T-cell (primary cell): ENCODE measurements at regions of chr3 and their contacts with region 1.

Region 1: DNA sequence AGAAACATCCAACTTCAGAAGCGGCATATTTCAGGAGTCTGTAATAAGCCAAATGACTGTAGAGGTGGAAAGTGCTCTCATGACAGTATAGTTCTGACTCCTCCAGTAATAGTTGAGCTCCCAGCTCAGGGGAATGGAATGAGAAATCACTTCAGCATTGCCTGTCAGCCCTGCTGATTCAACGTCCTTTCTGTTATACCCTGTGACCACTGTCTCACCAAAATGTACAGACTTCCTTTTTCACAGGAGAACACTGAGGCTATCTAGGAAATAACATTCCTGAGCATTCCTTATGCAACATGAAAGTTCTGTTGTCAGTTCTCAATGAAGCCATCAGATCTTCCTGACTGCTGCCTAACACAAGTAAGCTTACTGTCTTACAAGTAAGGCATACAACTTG is 284.5 kb upstream of the MME start:
- DNase-seq: no peak
- ATAC-seq: no peak
- H3K4me3 ChIP-seq: no peak overlapping the region
- H3K4me3 Mint-ChIP-seq: no peak overlapping the region
- H3K27ac ChIP-seq: no peak overlapping the region
- H3K27ac Mint-ChIP-seq: no peak overlapping the region
- H3K4me1 ChIP-seq: no peaks in the 10 kb centered on the region
- H3K4me1 Mint-ChIP-seq: no peaks in the 10 kb centered on the region
- H3K27me3 ChIP-seq: no peaks in the 10 kb centered on the region
- H3K27me3 Mint-ChIP-seq: no peaks in the 10 kb centered on the region

Region 2: GRCh38 chr3:152843955-152844354 is 1951.6 kb before region 1 on chr3:
- CTCF ChIA-PET with region 1: interaction called in 1 of 2 experiments, 10 read pairs
- POLR2A ChIA-PET with region 1: no interaction called
- DNase-seq: no peak
- ATAC-seq: no peak
- H3K4me3 ChIP-seq: no peak overlapping the region
- H3K4me3 Mint-ChIP-seq: no peak overlapping the region
- H3K27ac ChIP-seq: no peak overlapping the region
- H3K27ac Mint-ChIP-seq: no peak overlapping the region
- H3K4me1 ChIP-seq: peaks cover 0 to 2% of the 10 kb centered on the region in 2 experiments
- H3K4me1 Mint-ChIP-seq: no peaks in the 10 kb centered on the region
- H3K27me3 ChIP-seq: no peaks in the 10 kb centered on the region
- H3K27me3 Mint-ChIP-seq: peaks cover 8 to 15% of the 10 kb centered on the region in 2 donors

Region 3: GRCh38 chr3:154734468-154734867 is 61.1 kb before region 1 on chr3:
- CTCF ChIA-PET with region 1: no interaction called
- POLR2A ChIA-PET with region 1: no interaction called
- DNase-seq: no peak
- ATAC-seq: no peak
- H3K4me3 ChIP-seq: no peak overlapping the region
- H3K4me3 Mint-ChIP-seq: no peak overlapping the region
- H3K27ac ChIP-seq: no peak overlapping the region
- H3K27ac Mint-ChIP-seq: no peak overlapping the region
- H3K4me1 ChIP-seq: no peaks in the 10 kb centered on the region
- H3K4me1 Mint-ChIP-seq: no peaks in the 10 kb centered on the region
- H3K27me3 ChIP-seq: no peaks in the 10 kb centered on the region
- H3K27me3 Mint-ChIP-seq: no peaks in the 10 kb centered on the region

Region 4: DNA sequence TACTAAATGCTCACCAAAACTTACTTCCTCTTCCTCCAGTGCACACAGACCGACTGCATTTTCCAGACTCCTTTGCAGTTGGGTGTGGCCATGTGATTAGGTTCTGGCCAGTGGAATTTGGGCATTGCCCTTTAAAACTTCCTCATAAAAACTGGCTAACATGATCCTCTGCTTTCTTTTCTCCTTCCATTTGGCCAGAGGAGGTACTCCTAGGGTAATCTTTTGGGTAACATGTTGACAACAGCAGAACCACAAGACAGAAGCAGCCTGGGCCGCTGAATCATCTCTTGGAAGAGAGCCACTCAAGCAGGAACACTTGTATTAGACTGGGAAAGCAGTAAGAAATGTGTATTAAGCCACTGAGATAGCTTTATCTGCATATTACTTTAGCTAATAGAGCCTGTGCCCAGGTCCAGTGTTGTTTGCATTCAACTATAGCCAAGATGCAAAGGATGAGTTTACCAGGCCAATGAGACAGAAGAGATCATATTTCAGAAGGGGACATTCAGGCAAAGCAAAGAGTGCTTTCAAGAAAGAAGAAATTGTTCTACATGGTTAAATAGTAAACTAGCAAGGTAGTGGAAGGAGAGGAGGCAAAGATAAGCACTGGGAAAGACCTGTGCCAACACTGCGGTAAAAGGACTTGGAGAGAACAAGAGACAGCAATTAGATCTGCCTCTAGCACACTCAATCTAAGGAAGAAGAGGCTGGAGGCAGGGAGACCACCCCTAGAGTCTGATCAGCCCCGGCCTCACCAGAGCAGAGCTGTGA is 869.5 kb after region 1 on chr3:
- CTCF ChIA-PET with region 1: interaction called in 1 of 2 experiments, 10 read pairs
- POLR2A ChIA-PET with region 1: no interaction called
- DNase-seq: no peak
- ATAC-seq: no peak
- H3K4me3 ChIP-seq: no peak overlapping the region
- H3K4me3 Mint-ChIP-seq: no peak overlapping the region
- H3K27ac ChIP-seq: no peak overlapping the region
- H3K27ac Mint-ChIP-seq: no peak overlapping the region
- H3K4me1 ChIP-seq: no peaks in the 10 kb centered on the region
- H3K4me1 Mint-ChIP-seq: no peaks in the 10 kb centered on the region
- H3K27me3 ChIP-seq: no peaks in the 10 kb centered on the region
- H3K27me3 Mint-ChIP-seq: peaks cover 0 to 3% of the 10 kb centered on the region in 2 donors